Sigmoid colon (tissue), 7 donors: ENCODE measurements at regions of chr2 and their contacts with region 1.

Region 1: DNA sequence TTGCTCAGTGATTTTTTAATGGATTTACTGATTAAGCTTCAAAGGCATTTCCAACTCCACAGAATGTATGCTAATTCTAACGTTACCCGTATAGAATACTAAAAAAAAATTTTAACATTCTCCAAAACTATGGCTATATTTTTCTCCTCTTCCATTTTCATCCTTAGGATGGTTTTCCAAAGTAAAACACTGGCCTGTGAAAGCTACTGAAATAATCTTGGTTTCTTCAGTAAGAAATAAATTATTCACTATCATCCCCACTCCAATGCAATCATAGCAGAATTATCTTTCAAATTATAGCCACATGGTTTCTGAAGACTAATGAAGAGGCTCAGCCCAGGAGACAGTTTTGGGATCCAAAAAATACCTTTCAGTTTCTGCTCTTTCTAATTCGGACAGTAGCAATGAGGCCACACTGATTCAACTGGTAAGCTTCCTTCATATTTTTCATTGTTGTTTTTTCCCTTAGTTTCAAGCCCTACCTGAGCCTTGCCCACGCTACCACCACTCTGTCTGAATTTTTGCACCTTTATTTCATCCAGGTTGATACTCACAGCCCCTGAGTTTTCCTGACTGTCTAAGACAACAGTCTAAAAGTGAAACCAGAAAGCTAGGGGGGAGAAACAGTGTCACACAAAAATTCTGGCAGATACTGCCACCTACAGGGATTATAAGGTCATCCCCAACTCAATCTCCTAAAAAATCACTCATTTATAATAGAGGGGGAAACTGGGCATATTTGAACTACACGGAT is 887.9 kb downstream of the NRXN1 start:
- DNase-seq: no peak
- H3K4me3 ChIP-seq: peak overlapping the region in 3 of 4 donors; percentile 35 to 42 (median 40)
- H3K27ac ChIP-seq: peak overlapping the region in 2 of 4 donors; percentile 10 to 30
- H3K4me1 ChIP-seq: peaks cover 0 to 8% (median 0%) of the 10 kb centered on the region in 4 donors
- H3K27me3 ChIP-seq: no peaks in the 10 kb centered on the region
- CTCF ChIP-seq: peak; percentile 25 to 55 (median 39)
- EP300 ChIP-seq: no peak
- POLR2A ChIP-seq: no peak

Region 2: GRCh38 chr2:49687918-49688317 is 456.1 kb before region 1 on chr2:
- intact Hi-C with region 1: loop called (anchors 5 kb)
- DNase-seq: no peak
- H3K4me3 ChIP-seq: no peak overlapping the region
- H3K27ac ChIP-seq: no peak overlapping the region
- H3K4me1 ChIP-seq: no peaks in the 10 kb centered on the region
- H3K27me3 ChIP-seq: no peaks in the 10 kb centered on the region
- CTCF ChIP-seq: peak in 1 of 4 experiments; percentile 36
- EP300 ChIP-seq: no peak
- POLR2A ChIP-seq: no peak

Region 3: DNA sequence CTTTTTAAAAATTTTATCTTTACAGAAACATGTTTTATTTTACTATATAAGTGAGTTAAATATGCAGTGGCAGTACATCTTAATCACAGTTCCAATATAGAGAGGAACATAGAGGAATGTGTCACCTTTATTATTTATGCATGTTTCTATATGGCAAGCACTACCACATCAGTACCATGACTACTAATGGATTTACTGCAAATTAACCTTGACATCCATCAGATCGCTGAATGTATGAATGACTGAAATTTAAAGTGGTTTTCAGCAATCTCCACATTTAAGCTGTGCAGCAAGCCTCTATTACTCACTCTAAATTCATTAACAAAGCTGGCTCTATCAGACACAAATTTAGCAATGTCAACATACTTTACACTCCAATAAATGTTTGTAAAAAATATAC is 97.3 kb after region 1 on chr2:
- intact Hi-C with region 1: no loop called
- DNase-seq: no peak
- H3K4me3 ChIP-seq: no peak overlapping the region
- H3K27ac ChIP-seq: no peak overlapping the region
- H3K4me1 ChIP-seq: peaks cover 0 to 3% (median 0%) of the 10 kb centered on the region in 4 donors
- H3K27me3 ChIP-seq: no peaks in the 10 kb centered on the region
- CTCF ChIP-seq: no peak
- EP300 ChIP-seq: no peak
- POLR2A ChIP-seq: no peak